ENCODE measurements at regions of chr11 and their contacts with region 1.

Region 1: GRCh38 chr11:22307065-22307464 is 31.1 kb upstream of the SLC17A6 start:
- DNase-seq: no peak
- ATAC-seq: no peak
- H3K4me3 ChIP-seq: no peak overlapping the region
- H3K4me3 Mint-ChIP-seq: no peak overlapping the region
- H3K27ac ChIP-seq: no peak overlapping the region
- H3K27ac Mint-ChIP-seq: no peak overlapping the region
- H3K4me1 ChIP-seq: no peaks in the 10 kb centered on the region
- H3K4me1 Mint-ChIP-seq: no peaks in the 10 kb centered on the region
- H3K27me3 ChIP-seq: no peaks in the 10 kb centered on the region
- H3K27me3 Mint-ChIP-seq: peaks cover 8 to 17% of the 10 kb centered on the region in 2 donors

Region 2: DNA sequence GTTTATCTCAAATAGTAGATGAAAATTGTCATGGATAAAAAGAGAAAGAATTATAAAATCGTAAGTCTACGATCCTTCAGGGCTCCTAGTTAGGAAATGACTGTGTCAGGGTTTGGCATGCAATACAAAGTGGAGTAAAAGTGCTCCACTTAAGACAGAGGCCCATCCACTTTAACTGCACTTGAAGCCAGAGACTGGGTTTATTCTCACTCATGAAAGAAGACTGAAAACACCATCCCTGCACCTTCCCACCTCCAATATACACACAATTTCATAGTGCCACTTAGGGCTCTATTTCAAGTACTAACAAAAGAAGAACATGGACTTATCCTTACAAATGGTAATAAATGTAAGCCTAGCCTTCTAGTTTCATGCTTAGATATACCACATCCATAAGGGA is 43.5 kb before region 1 on chr11:
- CTCF ChIA-PET with region 1: interaction called in 1 of 2 experiments, 11 read pairs
- POLR2A ChIA-PET with region 1: no interaction called
- DNase-seq: no peak
- ATAC-seq: no peak
- H3K4me3 ChIP-seq: no peak overlapping the region
- H3K4me3 Mint-ChIP-seq: no peak overlapping the region
- H3K27ac ChIP-seq: no peak overlapping the region
- H3K27ac Mint-ChIP-seq: no peak overlapping the region
- H3K4me1 ChIP-seq: no peaks in the 10 kb centered on the region
- H3K4me1 Mint-ChIP-seq: no peaks in the 10 kb centered on the region
- H3K27me3 ChIP-seq: no peaks in the 10 kb centered on the region
- H3K27me3 Mint-ChIP-seq: peaks cover 0 to 3% of the 10 kb centered on the region in 2 donors

Measured in T-cell (primary cell).